WTC11 (cell line): ENCODE measurements at regions of chr6 and their contacts with region 1.

Region 1: GRCh38 chr6:136643850-136644596 is 93.8 kb upstream of the MAP7 start:
- DNase-seq: peak; percentile 96
- ATAC-seq: peak; percentile 98
- H3K4me3 Mint-ChIP-seq: no peak overlapping the region
- H3K27ac Mint-ChIP-seq: no peak overlapping the region
- H3K4me1 Mint-ChIP-seq: peaks cover 15% of the 10 kb centered on the region
- H3K27me3 Mint-ChIP-seq: no peaks in the 10 kb centered on the region
- CTCF ChIP-seq: peak; percentile 84

Region 2: GRCh38 chr6:136627191-136627590 is 16.8 kb before region 1 on chr6:
- CTCF ChIA-PET with region 1: interaction called, 10 read pairs
- POLR2A ChIA-PET with region 1: no interaction called
- DNase-seq: no peak
- ATAC-seq: no peak
- H3K4me3 Mint-ChIP-seq: no peak overlapping the region
- H3K27ac Mint-ChIP-seq: no peak overlapping the region
- H3K4me1 Mint-ChIP-seq: no peaks in the 10 kb centered on the region
- H3K27me3 Mint-ChIP-seq: no peaks in the 10 kb centered on the region
- CTCF ChIP-seq: no peak

Region 3: DNA sequence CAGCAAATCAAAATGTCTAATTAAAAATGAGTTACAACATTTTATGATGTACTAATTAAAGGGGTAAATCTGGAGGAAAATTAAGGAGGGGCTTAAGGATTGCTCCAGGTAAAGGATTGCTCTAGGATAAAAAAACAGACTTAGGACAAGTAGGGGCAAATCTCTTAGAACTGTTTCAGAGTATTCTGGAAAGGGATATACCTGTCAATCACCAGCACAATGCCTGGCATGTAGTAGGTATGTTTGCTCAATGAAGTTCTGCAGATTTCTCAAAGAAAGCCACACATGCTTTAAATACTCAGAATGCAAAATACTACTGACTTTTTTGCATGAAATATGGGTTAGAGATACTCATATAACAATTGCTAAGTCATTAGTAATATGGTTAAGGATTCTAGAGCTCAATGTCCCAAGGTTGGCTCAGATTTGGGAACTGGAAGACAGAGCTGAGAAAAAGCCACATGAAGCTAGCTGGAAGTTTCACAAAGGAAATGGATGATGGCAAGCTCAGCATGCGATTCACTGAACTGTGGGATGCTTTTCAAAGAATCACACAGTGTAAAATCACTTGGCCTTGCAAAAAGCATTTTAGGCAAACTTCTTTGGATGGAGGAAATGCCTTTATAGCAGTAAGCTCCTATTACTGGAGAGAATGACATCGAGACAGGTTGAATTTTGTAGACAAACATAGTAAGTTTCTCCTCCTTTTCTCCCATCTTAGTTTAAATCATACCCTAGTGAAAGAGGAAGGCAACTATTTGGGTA is 75.4 kb after region 1 on chr6:
- CTCF ChIA-PET with region 1: interaction called, 12 read pairs
- POLR2A ChIA-PET with region 1: no interaction called
- DNase-seq: no peak
- ATAC-seq: no peak
- H3K4me3 Mint-ChIP-seq: no peak overlapping the region
- H3K27ac Mint-ChIP-seq: no peak overlapping the region
- H3K4me1 Mint-ChIP-seq: peaks cover 15% of the 10 kb centered on the region
- H3K27me3 Mint-ChIP-seq: no peaks in the 10 kb centered on the region; the same call in 1 of the 2 replicates
- CTCF ChIP-seq: no peak

Region 4: GRCh38 chr6:136792410-136793262 is 148.6 kb after region 1 on chr6 and contains the start of gene MAP3K5:
- CTCF ChIA-PET with region 1: interaction called, 149 read pairs
- POLR2A ChIA-PET with region 1: interaction called, 9 read pairs
- DNase-seq: peak; percentile 86
- ATAC-seq: peak; percentile 82
- H3K4me3 Mint-ChIP-seq: peak within 1 kb of the TSS; percentile 84
- H3K27ac Mint-ChIP-seq: no peak within 1 kb of the TSS
- H3K4me1 Mint-ChIP-seq: peaks cover 10% of the 10 kb centered on the region; the same call in 1 of the 2 replicates
- H3K27me3 Mint-ChIP-seq: peaks cover 57% of the 10 kb centered on the region
- CTCF ChIP-seq: peak; percentile 55
- total RNA-seq, gene MAP3K5: 1.6 to 1.9 TPM (median 1.7 TPM) in 3 replicates

Region 5: DNA sequence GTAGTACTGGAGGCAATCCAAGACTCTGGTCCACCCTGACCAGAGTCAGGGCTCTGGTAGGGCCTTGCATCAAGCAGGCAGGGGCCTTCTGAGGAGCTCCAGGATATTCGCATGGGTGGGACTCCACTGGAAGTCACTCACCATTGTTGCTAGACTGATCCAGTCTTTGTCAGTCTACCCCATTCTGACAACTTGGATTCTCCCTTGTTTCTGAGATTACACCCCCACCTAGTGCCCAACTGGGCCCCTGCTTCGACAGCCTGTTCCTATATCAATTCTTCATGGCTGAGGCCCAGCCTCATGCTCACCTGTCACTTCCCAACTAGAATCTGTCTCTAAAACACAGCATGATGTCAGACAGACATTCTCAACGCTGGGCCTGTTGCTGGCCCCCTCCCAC is 283.3 kb after region 1 on chr6:
- CTCF ChIA-PET with region 1: interaction called, 18 read pairs
- POLR2A ChIA-PET with region 1: no interaction called
- DNase-seq: peak; percentile 49
- ATAC-seq: peak; percentile 77
- H3K4me3 Mint-ChIP-seq: no peak overlapping the region
- H3K27ac Mint-ChIP-seq: no peak overlapping the region
- H3K4me1 Mint-ChIP-seq: peaks cover 25% of the 10 kb centered on the region
- H3K27me3 Mint-ChIP-seq: peaks cover 39% of the 10 kb centered on the region
- CTCF ChIP-seq: no peak